ENCODE measurements at regions of chr3 and their contacts with region 1.

Region 1: GRCh38 chr3:185942907-185943759 is 5.3 kb upstream of the TRA2B start:
- DNase-seq: peak; percentile 72 to 88 (median 82)
- ATAC-seq: peak; percentile 100
- H3K4me3 ChIP-seq: peak overlapping the region; percentile 26
- H3K4me3 Mint-ChIP-seq: peak overlapping the region; percentile 9 to 76 (median 61)
- H3K27ac ChIP-seq: no peak overlapping the region
- H3K27ac Mint-ChIP-seq: peak overlapping the region in 6 of 9 donors; percentile 55 to 87 (median 68)
- H3K4me1 ChIP-seq: peaks cover 7 to 10% of the 10 kb centered on the region in 2 donors
- H3K4me1 Mint-ChIP-seq: peaks cover 11 to 26% (median 19%) of the 10 kb centered on the region in 7 donors
- H3K27me3 ChIP-seq: no peaks in the 10 kb centered on the region
- H3K27me3 Mint-ChIP-seq: peaks cover 0 to 24% (median 8%) of the 10 kb centered on the region in 5 donors

Region 2: GRCh38 chr3:185929192-185930151 is 13.7 kb before region 1 on chr3:
- CTCF ChIA-PET with region 1: interaction called, 10 read pairs
- POLR2A ChIA-PET with region 1: interaction called, 39 read pairs
- intact Hi-C with region 1: no loop called
- DNase-seq: no peak
- ATAC-seq: no peak
- H3K4me3 ChIP-seq: peak overlapping the region; percentile 21
- H3K4me3 Mint-ChIP-seq: peak overlapping the region; percentile 31 to 100 (median 100)
- H3K27ac ChIP-seq: peak overlapping the region; percentile 27
- H3K27ac Mint-ChIP-seq: peak overlapping the region; percentile 7 to 91 (median 67)
- H3K4me1 ChIP-seq: peaks cover 69 to 89% of the 10 kb centered on the region in 2 donors
- H3K4me1 Mint-ChIP-seq: peaks cover 78 to 100% (median 100%) of the 10 kb centered on the region in 7 donors
- H3K27me3 ChIP-seq: no peaks in the 10 kb centered on the region
- H3K27me3 Mint-ChIP-seq: no peaks in the 10 kb centered on the region

Region 3: DNA sequence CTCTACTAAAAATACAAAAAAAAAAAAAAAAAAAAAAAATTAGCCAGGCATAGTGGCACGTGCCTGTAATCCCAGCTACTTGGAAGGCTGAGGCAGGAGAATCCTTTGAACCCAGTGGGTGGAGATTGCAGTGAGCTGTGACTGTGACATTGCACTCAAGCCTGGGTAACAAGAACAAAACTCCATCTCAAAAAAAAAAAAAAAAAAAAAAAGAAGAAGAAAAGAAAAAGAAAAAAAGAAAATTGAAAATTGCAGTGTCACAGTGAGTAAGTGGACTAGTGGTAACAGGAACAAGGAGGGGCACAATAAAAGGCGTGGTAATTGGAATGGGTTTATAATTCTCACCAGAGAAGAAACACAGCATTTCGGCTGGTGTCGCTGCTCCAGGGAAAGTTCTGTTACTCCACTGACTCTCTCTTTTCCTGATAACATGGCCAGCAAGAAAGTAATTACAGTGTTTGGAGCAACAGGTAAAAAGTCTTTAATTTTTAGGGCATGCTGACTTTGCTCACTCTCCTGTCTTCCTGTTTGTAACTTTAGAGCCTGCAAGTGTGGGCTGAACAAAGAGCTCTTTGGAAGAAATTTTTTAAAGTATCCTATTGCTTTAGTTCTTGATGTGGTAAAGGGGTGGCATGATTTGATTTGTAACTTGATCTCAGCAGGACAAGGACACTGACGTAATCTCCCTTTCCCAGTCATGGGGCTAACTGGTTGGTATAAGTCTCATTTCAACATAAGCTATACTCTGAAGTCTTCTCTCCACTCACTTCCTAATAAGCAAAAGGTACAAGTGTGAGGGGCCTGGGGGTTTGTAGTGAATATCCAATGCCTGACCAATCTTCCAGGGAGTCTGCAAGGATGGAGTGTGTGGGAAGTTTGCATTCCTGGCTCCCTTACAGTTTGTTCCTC is 16.7 kb after region 1 on chr3:
- CTCF ChIA-PET with region 1: interaction called, 17 read pairs
- POLR2A ChIA-PET with region 1: interaction called, 17 read pairs
- intact Hi-C with region 1: loop called in 1 of 2 experiments (anchors 2 kb)
- DNase-seq: peak in 6 of 9 donors; percentile 26 to 53 (median 36)
- ATAC-seq: peak; percentile 73
- H3K4me3 ChIP-seq: no peak overlapping the region
- H3K4me3 Mint-ChIP-seq: peak overlapping the region in 6 of 10 donors; percentile 45 to 70 (median 54)
- H3K27ac ChIP-seq: no peak overlapping the region
- H3K27ac Mint-ChIP-seq: peak overlapping the region in 3 of 9 donors; percentile 4 to 90 (median 62)
- H3K4me1 ChIP-seq: peaks cover 0 to 8% of the 10 kb centered on the region in 2 donors
- H3K4me1 Mint-ChIP-seq: peaks cover 0 to 10% (median 8%) of the 10 kb centered on the region in 7 donors
- H3K27me3 ChIP-seq: no peaks in the 10 kb centered on the region
- H3K27me3 Mint-ChIP-seq: peaks cover 0 to 12% (median 4%) of the 10 kb centered on the region in 5 donors

Region 4: GRCh38 chr3:185976977-185977678 is 34.0 kb after region 1 on chr3:
- CTCF ChIA-PET with region 1: interaction called, 18 read pairs
- POLR2A ChIA-PET with region 1: no interaction called
- intact Hi-C with region 1: loop called (anchors 1 kb)
- DNase-seq: peak; percentile 47 to 84 (median 70)
- ATAC-seq: peak; percentile 96
- H3K4me3 ChIP-seq: no peak overlapping the region
- H3K4me3 Mint-ChIP-seq: peak overlapping the region in 1 of 10 donors; percentile 5
- H3K27ac ChIP-seq: no peak overlapping the region
- H3K27ac Mint-ChIP-seq: peak overlapping the region in 1 of 9 donors; percentile 21
- H3K4me1 ChIP-seq: no peaks in the 10 kb centered on the region
- H3K4me1 Mint-ChIP-seq: peaks cover 4 to 10% (median 9%) of the 10 kb centered on the region in 7 donors
- H3K27me3 ChIP-seq: no peaks in the 10 kb centered on the region
- H3K27me3 Mint-ChIP-seq: peaks cover 0 to 19% (median 0%) of the 10 kb centered on the region in 5 donors

Region 5: GRCh38 chr3:186268616-186269448 is 325.7 kb after region 1 on chr3:
- CTCF ChIA-PET with region 1: no interaction called
- POLR2A ChIA-PET with region 1: no interaction called
- intact Hi-C with region 1: no loop called
- DNase-seq: no peak
- ATAC-seq: no peak
- H3K4me3 ChIP-seq: no peak overlapping the region
- H3K4me3 Mint-ChIP-seq: no peak overlapping the region
- H3K27ac ChIP-seq: no peak overlapping the region
- H3K27ac Mint-ChIP-seq: no peak overlapping the region
- H3K4me1 ChIP-seq: no peaks in the 10 kb centered on the region
- H3K4me1 Mint-ChIP-seq: no peaks in the 10 kb centered on the region
- H3K27me3 ChIP-seq: no peaks in the 10 kb centered on the region
- H3K27me3 Mint-ChIP-seq: peaks cover 0 to 6% (median 0%) of the 10 kb centered on the region in 5 donors

Region 6: DNA sequence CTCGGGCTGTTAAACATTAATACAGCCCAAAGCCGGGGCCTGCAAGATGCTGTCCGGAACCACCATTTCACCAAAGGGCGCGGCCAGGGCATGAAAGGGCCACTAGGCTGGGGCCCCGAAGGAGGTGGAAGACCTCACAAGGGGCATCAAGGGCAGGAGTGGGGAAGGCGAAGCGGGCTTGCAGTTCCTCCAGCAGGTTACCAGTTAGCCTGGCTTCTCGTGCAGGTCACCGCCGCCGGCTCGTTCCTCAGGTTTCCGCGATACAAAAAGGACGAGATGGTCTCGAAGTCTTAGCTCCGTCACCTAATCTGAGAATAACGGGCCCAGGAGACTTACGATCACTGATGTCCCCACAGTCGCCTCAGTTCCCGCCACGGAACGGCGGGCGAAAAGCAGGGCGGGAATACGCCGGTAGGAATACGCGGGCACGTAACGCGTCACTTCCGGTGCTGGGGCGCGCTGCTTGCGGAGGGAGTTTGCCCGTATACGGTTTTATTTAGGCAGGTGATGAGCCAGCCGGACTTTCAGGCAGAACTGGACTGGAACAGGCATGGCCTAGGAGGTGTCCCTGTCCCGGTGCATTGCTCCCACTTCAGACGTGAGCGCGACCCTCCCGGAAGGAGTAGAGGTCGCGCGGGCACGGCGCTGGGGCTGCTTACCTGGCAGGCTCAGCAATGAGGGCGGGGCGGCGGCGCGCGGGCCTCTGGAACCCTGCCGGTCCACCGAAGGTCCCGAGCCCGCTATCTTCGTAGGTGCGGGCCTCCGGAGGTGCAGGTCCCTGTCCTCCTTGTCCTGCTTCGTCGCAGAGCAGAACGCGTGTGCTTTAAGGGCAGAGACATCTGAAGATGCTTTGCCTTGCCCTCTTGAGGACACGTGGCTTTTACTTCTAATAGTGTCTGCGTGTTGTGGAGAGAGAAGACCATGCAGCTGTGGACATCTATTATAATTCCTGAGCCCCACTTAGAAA is 863.2 kb after region 1 on chr3 and contains the start of gene RFC4:
- CTCF ChIA-PET with region 1: no interaction called
- POLR2A ChIA-PET with region 1: interaction called, 3 read pairs
- intact Hi-C with region 1: loop called in 1 of 2 experiments (anchors 2 kb)
- DNase-seq: peak; percentile 66 to 86 (median 82)
- ATAC-seq: peak; percentile 91
- H3K4me3 ChIP-seq: peak within 1 kb of the TSS; percentile 95
- H3K4me3 Mint-ChIP-seq: peak within 1 kb of the TSS; percentile 89 to 97 (median 94)
- H3K27ac ChIP-seq: peak within 1 kb of the TSS; percentile 86
- H3K27ac Mint-ChIP-seq: peak within 1 kb of the TSS; percentile 84 to 97 (median 95)
- H3K4me1 ChIP-seq: peaks cover 17 to 21% of the 10 kb centered on the region in 2 donors
- H3K4me1 Mint-ChIP-seq: peaks cover 5 to 38% (median 18%) of the 10 kb centered on the region in 7 donors
- H3K27me3 ChIP-seq: no peaks in the 10 kb centered on the region
- H3K27me3 Mint-ChIP-seq: no peaks in the 10 kb centered on the region
- total RNA-seq, gene RFC4: 8.7 to 71.6 (median 22.1) TPM

Region 7: GRCh38 chr3:186909078-186909853 is 966.1 kb after region 1 on chr3:
- CTCF ChIA-PET with region 1: no interaction called
- POLR2A ChIA-PET with region 1: interaction called, 10 read pairs
- intact Hi-C with region 1: no loop called
- DNase-seq: peak; percentile 40 to 86 (median 78)
- ATAC-seq: peak; percentile 86
- H3K4me3 ChIP-seq: peak overlapping the region; percentile 48
- H3K4me3 Mint-ChIP-seq: peak overlapping the region; percentile 61 to 78 (median 72)
- H3K27ac ChIP-seq: peak overlapping the region; percentile 66
- H3K27ac Mint-ChIP-seq: peak overlapping the region; percentile 88 to 94 (median 91)
- H3K4me1 ChIP-seq: peaks cover 17 to 18% of the 10 kb centered on the region in 2 donors
- H3K4me1 Mint-ChIP-seq: peaks cover 17 to 48% (median 37%) of the 10 kb centered on the region in 7 donors
- H3K27me3 ChIP-seq: no peaks in the 10 kb centered on the region
- H3K27me3 Mint-ChIP-seq: no peaks in the 10 kb centered on the region

Measured in naive thymus-derived CD4-positive, alpha-beta T cell (primary cell).